ENCODE measurements at regions of chr3 and their contacts with region 1.

Region 1: GRCh38 chr3:8954938-8955763 is 8.1 kb downstream of the RAD18 start:
- DNase-seq: no peak
- H3K4me3 ChIP-seq: no peak overlapping the region
- H3K27ac ChIP-seq: no peak overlapping the region
- H3K4me1 ChIP-seq: no peaks in the 10 kb centered on the region
- H3K27me3 ChIP-seq: no peaks in the 10 kb centered on the region
- CTCF ChIP-seq: no peak
- POLR2A ChIP-seq: no peak

Region 2: GRCh38 chr3:8875836-8876235 is 79.3 kb before region 1 on chr3:
- intact Hi-C with region 1: no loop called
- DNase-seq: no peak
- H3K4me3 ChIP-seq: no peak overlapping the region
- H3K27ac ChIP-seq: no peak overlapping the region
- H3K4me1 ChIP-seq: no peaks in the 10 kb centered on the region
- H3K27me3 ChIP-seq: no peaks in the 10 kb centered on the region
- CTCF ChIP-seq: no peak
- POLR2A ChIP-seq: no peak

Region 3: DNA sequence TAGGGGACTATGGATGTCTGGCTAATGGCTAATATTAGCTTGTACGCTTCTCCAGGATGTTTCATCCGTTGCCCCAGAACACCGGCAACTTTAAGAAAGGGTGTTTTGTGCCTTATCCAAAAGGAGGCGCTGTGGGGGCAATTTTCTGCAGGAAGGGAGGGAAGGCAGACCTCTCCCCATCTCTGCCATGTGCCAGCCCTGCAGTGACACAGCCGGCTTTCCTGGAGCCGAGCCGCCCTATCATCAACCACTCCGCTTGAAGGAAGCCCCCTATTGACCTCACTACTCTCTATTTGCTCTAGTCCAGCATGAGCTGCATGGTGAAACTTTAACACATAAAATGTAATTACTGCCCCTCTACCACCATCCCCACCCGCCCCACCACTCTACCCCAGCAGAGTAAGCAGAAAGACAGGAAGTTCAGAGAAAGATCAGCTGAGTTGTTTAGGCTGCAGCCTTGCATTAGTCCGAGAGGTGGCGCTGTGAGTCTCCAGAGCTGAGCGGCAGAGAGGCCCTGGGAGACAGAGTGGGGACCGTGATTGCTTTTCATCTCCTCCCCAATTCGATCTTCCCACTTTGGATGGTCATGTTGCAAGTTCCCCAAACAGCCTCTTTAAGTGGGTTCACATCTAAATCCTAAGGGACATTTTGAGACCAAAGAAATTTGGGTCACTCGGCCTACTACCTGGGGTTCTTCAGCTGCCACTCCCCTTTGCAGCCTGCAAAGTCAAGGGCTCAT is 32.7 kb after region 1 on chr3:
- intact Hi-C with region 1: no loop called
- DNase-seq: peak in 1 of 2 donors; percentile 68
- H3K4me3 ChIP-seq: no peak overlapping the region
- H3K27ac ChIP-seq: no peak overlapping the region
- H3K4me1 ChIP-seq: no peaks in the 10 kb centered on the region
- H3K27me3 ChIP-seq: no peaks in the 10 kb centered on the region
- CTCF ChIP-seq: peak in 2 of 3 donors; percentile 58 to 66
- POLR2A ChIP-seq: no peak

Region 4: DNA sequence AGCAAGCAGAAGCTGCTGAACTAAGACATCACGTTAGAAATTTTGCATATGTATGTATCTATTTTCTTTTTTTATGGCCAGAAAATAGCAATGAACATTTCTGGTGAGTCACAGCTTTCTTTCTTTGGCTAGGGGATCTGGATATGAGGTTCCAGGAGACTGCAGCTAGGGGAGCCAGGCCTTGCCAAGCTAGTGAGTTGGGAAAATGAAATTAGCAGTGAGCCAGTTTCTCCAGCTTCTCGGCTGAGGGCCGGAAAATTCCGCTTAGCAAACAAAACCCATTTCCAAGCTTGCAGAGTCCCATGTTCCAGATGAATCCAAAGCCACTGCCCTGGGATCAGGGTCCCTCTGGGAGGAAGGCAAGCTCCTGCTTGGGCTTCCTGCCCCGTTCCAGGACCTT is 156.7 kb after region 1 on chr3:
- intact Hi-C with region 1: no loop called
- DNase-seq: no peak
- H3K4me3 ChIP-seq: no peak overlapping the region
- H3K27ac ChIP-seq: peak overlapping the region in 1 of 2 donors; percentile 19
- H3K4me1 ChIP-seq: no peaks in the 10 kb centered on the region
- H3K27me3 ChIP-seq: no peaks in the 10 kb centered on the region
- CTCF ChIP-seq: no peak
- POLR2A ChIP-seq: no peak

Region 5: DNA sequence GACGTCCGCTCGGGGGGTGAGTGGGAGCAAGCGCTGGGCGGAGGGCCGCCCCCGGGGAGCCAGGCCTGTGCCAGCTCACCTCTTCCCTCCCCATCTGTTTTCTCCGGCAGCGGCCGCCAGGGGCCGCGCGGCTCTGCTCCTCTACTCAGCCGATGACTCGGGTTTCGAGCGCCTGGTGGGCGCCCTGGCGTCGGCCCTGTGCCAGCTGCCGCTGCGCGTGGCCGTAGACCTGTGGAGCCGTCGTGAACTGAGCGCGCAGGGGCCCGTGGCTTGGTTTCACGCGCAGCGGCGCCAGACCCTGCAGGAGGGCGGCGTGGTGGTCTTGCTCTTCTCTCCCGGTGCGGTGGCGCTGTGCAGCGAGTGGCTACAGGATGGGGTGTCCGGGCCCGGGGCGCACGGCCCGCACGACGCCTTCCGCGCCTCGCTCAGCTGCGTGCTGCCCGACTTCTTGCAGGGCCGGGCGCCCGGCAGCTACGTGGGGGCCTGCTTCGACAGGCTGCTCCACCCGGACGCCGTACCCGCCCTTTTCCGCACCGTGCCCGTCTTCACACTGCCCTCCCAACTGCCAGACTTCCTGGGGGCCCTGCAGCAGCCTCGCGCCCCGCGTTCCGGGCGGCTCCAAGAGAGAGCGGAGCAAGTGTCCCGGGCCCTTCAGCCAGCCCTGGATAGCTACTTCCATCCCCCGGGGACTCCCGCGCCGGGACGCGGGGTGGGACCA is 977.9 kb after region 1 on chr3:
- intact Hi-C with region 1: loop called (anchors 5 kb)
- DNase-seq: peak; percentile 84 to 85
- H3K4me3 ChIP-seq: peak overlapping the region; percentile 64 to 82 (median 77)
- H3K27ac ChIP-seq: peak overlapping the region; percentile 97 to 99
- H3K4me1 ChIP-seq: peaks cover 0 to 20% of the 10 kb centered on the region in 2 donors
- H3K27me3 ChIP-seq: no peaks in the 10 kb centered on the region
- CTCF ChIP-seq: peak; percentile 66 to 91 (median 74)
- POLR2A ChIP-seq: no peak

Measured in breast epithelium (tissue), 4 donors.